Lower leg skin (tissue), 4 donors: ENCODE measurements at regions of chr13 and their contacts with region 1.

Region 1: GRCh38 chr13:101018720-101019119 is 344.1 kb upstream of the TMTC4 start:
- DNase-seq: no peak
- H3K4me3 ChIP-seq: no peak overlapping the region
- CTCF ChIP-seq: no peak
- POLR2A ChIP-seq: no peak

Region 2: DNA sequence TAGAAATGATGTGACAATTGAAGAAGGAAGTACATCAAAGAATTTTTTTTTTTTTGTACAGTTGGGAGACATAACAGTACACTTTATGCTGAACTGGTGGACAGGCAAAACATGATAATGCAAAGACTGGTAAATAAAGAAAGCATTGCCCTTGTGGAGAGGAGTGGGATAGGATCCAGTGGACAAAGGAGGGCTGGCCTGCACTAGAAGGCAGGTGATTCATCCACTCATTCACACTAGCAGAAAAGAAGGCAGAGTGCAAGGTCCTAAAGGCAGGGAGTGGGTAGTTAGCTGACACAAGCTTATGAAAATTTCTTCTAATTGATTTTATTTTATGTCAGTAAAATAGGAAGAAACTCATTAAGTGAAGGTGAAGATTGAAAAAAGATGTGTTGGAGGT is 415.2 kb after region 1 on chr13:
- intact Hi-C with region 1: loop called (anchors 10 kb)
- DNase-seq: no peak
- H3K4me3 ChIP-seq: no peak overlapping the region
- CTCF ChIP-seq: no peak
- POLR2A ChIP-seq: no peak